Activated T-helper 1 cell treated with anti-CD3 and anti-CD28 coated beads, Interleukin-12 subunit alpha, Interleukin-12 subunit beta, Interleukin-2, Interleukin-4 antibody, amounts not matched to agents 30 ng/mL and 10 ng/mL and 1 ng/mL, durations not matched to agents 14 hours and 24 hours and 36 hours (primary cell): ENCODE measurements at regions of chr1 and their contacts with region 1.

Region 1: GRCh38 chr1:109112652-109113285 is 1.1 kb upstream of the ELAPOR1 start:
- DNase-seq: peak; percentile 84
- H3K4me3 Mint-ChIP-seq: peak overlapping the region; percentile 84
- H3K27ac Mint-ChIP-seq: peak overlapping the region; percentile 90
- H3K4me1 Mint-ChIP-seq: peaks cover 42% of the 10 kb centered on the region
- H3K27me3 Mint-ChIP-seq: peaks cover 25% of the 10 kb centered on the region

Region 2: DNA sequence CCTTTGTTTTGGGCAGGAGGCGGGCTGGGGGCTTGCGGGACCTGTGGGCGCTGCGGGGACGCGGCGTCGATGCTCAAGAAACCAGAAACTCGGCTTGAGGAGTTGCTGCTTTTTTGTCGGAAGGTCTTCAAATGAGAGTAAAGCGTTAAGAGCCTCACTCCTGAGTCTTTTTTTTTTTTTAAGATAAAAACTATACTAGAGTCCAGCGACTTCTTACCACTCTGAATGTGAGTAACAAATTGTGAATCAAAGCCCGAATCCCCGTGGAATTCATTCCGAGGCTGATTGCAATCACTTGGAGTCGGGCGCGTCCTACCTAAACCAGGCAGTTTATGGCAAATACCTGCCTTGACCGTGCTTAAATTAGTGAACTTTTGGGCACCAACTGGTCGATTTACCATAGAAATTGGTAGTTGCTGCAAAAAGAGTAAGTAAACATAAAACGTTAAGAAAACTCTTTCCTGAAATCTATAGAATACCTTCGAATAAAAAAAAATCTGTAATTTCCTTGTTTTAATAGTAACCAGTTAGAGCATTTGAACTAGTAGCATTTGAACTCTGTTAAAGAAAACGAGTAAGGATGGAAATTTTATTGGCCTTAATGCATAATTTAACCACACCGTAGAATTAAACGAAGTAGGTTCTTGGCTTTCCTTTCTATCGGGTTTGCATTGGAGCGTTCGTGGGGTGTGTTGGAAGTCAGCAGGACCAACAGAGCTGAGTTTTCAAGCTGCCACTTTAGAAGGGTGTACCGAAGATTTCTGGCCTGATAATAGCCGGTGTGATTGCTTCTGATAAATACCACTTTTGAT is 235.2 kb before region 1 on chr1:
- intact Hi-C with region 1: loop called (anchors 5 kb)
- DNase-seq: no peak
- H3K4me3 Mint-ChIP-seq: peak overlapping the region; percentile 89
- H3K27ac Mint-ChIP-seq: peak overlapping the region; percentile 48
- H3K4me1 Mint-ChIP-seq: peaks cover 45% of the 10 kb centered on the region
- H3K27me3 Mint-ChIP-seq: peaks cover 6% of the 10 kb centered on the region

Region 3: DNA sequence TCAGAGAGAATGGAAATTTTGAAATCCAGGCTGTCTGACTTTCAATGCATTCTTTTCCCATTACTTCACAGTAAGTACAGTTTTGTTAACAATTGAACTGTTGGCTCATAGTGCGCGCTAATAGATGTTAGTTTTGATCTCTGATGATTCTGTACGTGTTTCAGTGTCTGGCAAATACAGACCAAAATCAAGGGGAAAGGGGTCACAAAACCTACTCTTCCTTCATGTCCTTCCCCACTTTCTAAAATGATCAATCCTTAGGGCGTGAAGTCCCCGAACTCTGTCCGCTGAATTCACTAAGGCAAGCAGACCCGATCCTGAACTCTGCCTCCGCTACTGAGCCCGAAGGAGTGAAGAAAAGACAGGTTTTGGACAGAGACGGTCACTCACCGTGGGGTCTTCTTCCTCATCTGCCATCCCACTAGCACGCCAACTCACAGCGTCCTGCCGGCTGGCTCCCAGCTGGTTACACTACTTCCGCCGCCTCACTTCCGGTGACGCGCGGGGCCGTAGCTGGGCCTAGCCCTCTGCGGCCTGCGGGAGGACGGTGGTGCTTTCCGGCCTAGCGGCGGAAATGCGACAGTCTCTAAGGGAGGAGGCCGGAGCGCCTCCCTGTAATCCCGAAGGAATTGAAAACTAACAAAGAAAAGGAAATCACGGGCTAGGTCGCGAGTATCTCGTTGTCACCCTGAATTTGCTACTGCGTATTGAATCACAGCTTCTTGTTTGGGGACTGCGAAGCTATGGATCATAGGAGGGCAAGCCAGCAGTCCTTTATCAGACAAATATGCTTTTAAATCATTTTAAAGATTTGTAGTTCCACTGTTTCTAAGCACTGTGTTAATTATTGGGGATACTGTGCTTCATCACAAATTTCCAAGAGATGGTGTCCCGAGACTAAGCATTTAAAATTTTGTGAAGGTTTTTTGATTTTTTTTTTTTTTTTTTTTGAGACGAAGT is 37.0 kb before region 1 on chr1 and contains the start of gene TAF13:
- intact Hi-C with region 1: loop called (anchors 2 kb)
- DNase-seq: peak; percentile 87
- H3K4me3 Mint-ChIP-seq: peak within 1 kb of the TSS; percentile 99
- H3K27ac Mint-ChIP-seq: peak within 1 kb of the TSS; percentile 88
- H3K4me1 Mint-ChIP-seq: peaks cover 20% of the 10 kb centered on the region
- H3K27me3 Mint-ChIP-seq: peaks cover 1% of the 10 kb centered on the region
- total RNA-seq, gene TAF13: 28.8 and 32.6 TPM in 2 replicates

Region 4: GRCh38 chr1:109099938-109100773 is 12.6 kb before region 1 on chr1:
- intact Hi-C with region 1: loop called (anchors 1 kb)
- DNase-seq: peak; percentile 95
- H3K4me3 Mint-ChIP-seq: peak overlapping the region; percentile 97
- H3K27ac Mint-ChIP-seq: peak overlapping the region; percentile 98
- H3K4me1 Mint-ChIP-seq: peaks cover 10% of the 10 kb centered on the region
- H3K27me3 Mint-ChIP-seq: no peaks in the 10 kb centered on the region

Region 5: GRCh38 chr1:109193653-109194590 is 81.2 kb after region 1 on chr1:
- intact Hi-C with region 1: loop called (anchors 1 kb)
- DNase-seq: peak; percentile 55
- H3K4me3 Mint-ChIP-seq: no peak overlapping the region
- H3K27ac Mint-ChIP-seq: no peak overlapping the region
- H3K4me1 Mint-ChIP-seq: peaks cover 21% of the 10 kb centered on the region
- H3K27me3 Mint-ChIP-seq: no peaks in the 10 kb centered on the region

Region 6: GRCh38 chr1:109253484-109254141 is 140.8 kb after region 1 on chr1:
- intact Hi-C with region 1: no loop called
- DNase-seq: no peak
- H3K4me3 Mint-ChIP-seq: no peak overlapping the region
- H3K27ac Mint-ChIP-seq: no peak overlapping the region
- H3K4me1 Mint-ChIP-seq: peaks cover 6% of the 10 kb centered on the region
- H3K27me3 Mint-ChIP-seq: peaks cover 11% of the 10 kb centered on the region

Region 7: GRCh38 chr1:109298666-109299557 is 186.1 kb after region 1 on chr1:
- intact Hi-C with region 1: no loop called
- DNase-seq: no peak
- H3K4me3 Mint-ChIP-seq: no peak overlapping the region
- H3K27ac Mint-ChIP-seq: peak overlapping the region; percentile 41
- H3K4me1 Mint-ChIP-seq: peaks cover 8% of the 10 kb centered on the region
- H3K27me3 Mint-ChIP-seq: peaks cover 10% of the 10 kb centered on the region